ENCODE measurements at regions of chr16 and their contacts with region 1.

Region 1: DNA sequence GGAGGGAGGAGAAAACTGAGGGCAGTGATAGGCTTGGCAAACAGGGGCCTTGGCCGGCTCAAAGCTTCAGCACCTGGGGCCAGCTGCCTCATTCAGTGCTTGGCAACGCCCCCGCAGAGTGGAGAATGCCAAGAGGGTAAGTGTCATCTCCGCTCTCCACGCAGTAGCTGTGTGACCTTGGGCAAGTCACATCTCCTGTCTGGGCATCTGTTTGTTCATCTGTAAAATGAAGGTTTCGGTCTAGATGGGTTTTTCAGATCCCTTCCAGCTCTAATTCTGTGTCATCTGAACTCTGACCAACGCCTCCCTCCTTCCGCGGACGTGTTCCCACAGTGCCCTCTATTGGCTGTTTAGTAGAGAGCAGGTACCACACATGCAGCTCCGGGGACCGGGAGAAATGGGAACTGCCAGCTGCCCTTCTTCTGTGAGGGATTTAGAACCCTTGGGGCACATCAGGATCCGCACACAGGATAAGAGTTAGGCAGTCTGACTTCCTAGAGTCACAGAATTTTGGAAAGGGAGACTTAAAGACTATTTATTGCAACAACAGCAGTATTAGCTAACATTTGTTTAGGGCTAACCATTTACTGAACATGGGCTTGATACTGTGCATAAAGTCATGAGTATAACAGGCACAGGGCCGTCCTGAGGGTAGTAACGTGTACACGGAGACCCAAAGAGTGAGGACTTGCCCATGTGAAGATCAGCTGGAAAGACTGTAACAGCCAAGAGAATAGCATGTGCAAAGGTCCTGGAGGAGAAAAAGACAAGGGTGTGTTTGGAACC is 26.8 kb downstream of the GP2 start:
- DNase-seq: peak; percentile 46
- ATAC-seq: peak; percentile 97
- H3K4me3 ChIP-seq: no peak overlapping the region
- H3K27ac ChIP-seq: no peak overlapping the region
- H3K4me1 ChIP-seq: no peaks in the 10 kb centered on the region
- H3K27me3 ChIP-seq: no peaks in the 10 kb centered on the region; a peak in 1 of 4 replicates
- CTCF ChIP-seq: peak; percentile 85 to 91 (median 87)
- EP300 ChIP-seq: no peak
- POLR2A ChIP-seq: no peak
- RAD21 ChIP-seq: peak; percentile 88

Region 2: GRCh38 chr16:19898924-19899604 is 401.4 kb before region 1 on chr16:
- CTCF ChIA-PET with region 1: interaction called, 212 read pairs
- POLR2A ChIA-PET with region 1: no interaction called
- RAD21 ChIA-PET with region 1: interaction called, 12 read pairs
- SMC1A ChIA-PET with region 1: interaction called, 19 read pairs
- in situ Hi-C with region 1: no loop called
- intact Hi-C with region 1: no loop called
- DNase-seq: no peak
- ATAC-seq: peak; percentile 85
- H3K4me3 ChIP-seq: no peak overlapping the region
- H3K27ac ChIP-seq: no peak overlapping the region
- H3K4me1 ChIP-seq: no peaks in the 10 kb centered on the region
- H3K27me3 ChIP-seq: no peaks in the 10 kb centered on the region; a peak in 1 of 4 replicates
- CTCF ChIP-seq: peak; percentile 72 to 81 (median 79)
- EP300 ChIP-seq: no peak
- POLR2A ChIP-seq: no peak
- RAD21 ChIP-seq: peak; percentile 66

Region 3: DNA sequence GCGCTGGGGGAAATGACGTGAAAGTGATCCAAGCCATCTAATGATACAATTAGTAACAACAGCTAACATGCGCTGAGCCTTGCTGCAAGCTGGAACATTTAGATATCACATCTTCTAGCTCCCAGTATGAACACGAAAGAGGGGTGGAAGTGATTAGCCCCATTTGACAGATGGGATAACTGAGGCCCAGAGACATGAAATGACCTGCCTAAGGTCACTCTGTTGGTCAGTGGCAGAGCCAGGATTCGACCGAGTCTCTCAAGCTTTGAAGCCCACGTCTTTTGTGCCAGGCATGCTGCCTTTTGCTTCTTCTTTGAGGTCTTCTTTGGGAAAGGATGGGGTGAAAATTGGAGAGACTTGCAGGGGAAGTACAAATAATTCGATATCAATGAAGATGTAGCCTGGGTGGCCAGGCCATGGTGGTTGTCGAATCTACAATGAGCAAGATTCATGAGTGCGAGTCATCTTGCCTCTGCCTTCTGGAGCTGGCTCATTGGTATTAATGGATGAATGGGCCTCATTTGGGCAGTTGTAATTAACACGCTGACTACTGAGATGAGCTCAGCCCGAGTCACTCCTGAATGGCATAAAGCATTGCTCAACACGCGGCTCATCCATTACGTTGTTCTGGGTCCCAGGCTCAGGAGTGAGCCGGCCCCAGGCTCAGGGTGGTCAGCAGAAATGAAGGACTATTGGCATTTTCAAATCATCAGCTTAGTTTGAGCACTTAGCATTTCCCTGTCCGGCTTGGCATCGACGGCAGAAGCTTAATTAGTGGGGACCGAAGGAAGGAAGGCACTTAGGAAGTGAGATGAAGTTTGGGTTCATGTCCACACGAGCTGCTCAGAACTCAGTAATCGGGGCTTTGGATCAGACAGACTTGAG is 387.8 kb before region 1 on chr16:
- CTCF ChIA-PET with region 1: interaction called, 212 read pairs
- POLR2A ChIA-PET with region 1: no interaction called
- RAD21 ChIA-PET with region 1: interaction called, 117 read pairs
- SMC1A ChIA-PET with region 1: interaction called, 103 read pairs
- in situ Hi-C with region 1: loop called (anchors 5 kb)
- intact Hi-C with region 1: loop called (anchors 1 kb)
- DNase-seq: no peak
- ATAC-seq: no peak
- H3K4me3 ChIP-seq: no peak overlapping the region
- H3K27ac ChIP-seq: no peak overlapping the region
- H3K4me1 ChIP-seq: no peaks in the 10 kb centered on the region
- H3K27me3 ChIP-seq: no peaks in the 10 kb centered on the region; a peak in 1 of 4 replicates
- CTCF ChIP-seq: no peak
- EP300 ChIP-seq: no peak
- POLR2A ChIP-seq: no peak
- RAD21 ChIP-seq: no peak

Region 4: GRCh38 chr16:20099375-20099774 is 201.1 kb before region 1 on chr16:
- CTCF ChIA-PET with region 1: interaction called, 10 read pairs
- POLR2A ChIA-PET with region 1: no interaction called
- RAD21 ChIA-PET with region 1: no interaction called
- SMC1A ChIA-PET with region 1: no interaction called
- in situ Hi-C with region 1: no loop called
- intact Hi-C with region 1: no loop called
- DNase-seq: no peak
- ATAC-seq: no peak
- H3K4me3 ChIP-seq: no peak overlapping the region
- H3K27ac ChIP-seq: no peak overlapping the region
- H3K4me1 ChIP-seq: no peaks in the 10 kb centered on the region
- H3K27me3 ChIP-seq: no peaks in the 10 kb centered on the region
- CTCF ChIP-seq: no peak
- EP300 ChIP-seq: no peak
- POLR2A ChIP-seq: no peak
- RAD21 ChIP-seq: no peak

Region 5: DNA sequence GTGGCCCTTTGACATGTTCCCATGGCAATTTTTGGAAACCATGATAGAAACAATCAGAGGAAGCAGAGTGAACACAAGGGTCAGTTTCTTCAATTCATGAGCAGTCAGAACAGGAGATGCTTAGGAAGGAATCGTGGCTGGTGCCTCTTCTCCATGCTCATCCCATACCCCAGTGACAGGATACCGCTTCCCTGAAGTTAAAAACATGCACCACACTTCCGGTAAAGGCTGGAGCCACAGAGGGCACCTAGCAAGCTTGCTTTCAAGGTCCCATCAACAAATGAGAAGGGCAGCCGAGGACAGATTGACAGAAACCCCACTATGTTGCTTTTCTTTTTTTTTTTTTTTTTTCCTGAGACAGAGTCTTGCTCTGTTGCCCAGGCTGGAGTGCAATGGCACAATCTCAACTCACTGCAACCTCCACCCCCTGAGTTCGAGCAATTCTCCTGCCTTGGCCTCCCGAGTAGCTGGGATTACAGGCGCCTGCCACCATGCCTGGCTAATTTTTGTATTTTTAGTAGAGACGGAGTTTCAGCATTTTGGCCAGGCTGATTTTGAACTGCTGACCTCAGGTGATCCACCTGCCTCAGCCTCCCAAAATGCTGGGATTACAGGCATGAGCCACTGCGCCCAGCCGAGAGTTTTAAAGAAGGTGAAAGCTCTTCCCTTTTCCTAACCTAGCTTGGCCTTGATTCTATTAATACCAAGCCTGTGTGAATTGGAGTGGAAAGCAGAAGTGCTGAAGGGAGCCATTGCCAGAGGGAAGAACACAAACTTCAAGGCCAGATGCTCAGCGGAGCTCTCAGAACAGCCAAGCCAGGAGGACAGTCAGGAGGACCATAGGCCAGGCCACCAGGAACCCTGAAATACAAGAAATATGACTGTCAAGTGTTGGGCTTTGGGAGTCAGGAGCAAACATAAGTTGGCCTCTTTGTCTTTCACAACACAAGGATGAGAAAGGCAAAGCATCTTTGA is 10.2 kb after region 1 on chr16:
- CTCF ChIA-PET with region 1: interaction called, 19 read pairs
- POLR2A ChIA-PET with region 1: no interaction called
- RAD21 ChIA-PET with region 1: interaction called, 5 read pairs
- SMC1A ChIA-PET with region 1: interaction called, 4 read pairs
- in situ Hi-C with region 1: no loop called
- intact Hi-C with region 1: no loop called
- DNase-seq: no peak
- ATAC-seq: no peak
- H3K4me3 ChIP-seq: no peak overlapping the region
- H3K27ac ChIP-seq: no peak overlapping the region
- H3K4me1 ChIP-seq: no peaks in the 10 kb centered on the region
- H3K27me3 ChIP-seq: no peaks in the 10 kb centered on the region
- CTCF ChIP-seq: no peak
- EP300 ChIP-seq: no peak
- POLR2A ChIP-seq: no peak
- RAD21 ChIP-seq: no peak

Measured in GM12878 (cell line).